Activated B cell treated with CpG ODN at 0.5 μM for 24 hours (primary cell): ENCODE measurements at regions of chr3 and their contacts with region 1.

Region 1: DNA sequence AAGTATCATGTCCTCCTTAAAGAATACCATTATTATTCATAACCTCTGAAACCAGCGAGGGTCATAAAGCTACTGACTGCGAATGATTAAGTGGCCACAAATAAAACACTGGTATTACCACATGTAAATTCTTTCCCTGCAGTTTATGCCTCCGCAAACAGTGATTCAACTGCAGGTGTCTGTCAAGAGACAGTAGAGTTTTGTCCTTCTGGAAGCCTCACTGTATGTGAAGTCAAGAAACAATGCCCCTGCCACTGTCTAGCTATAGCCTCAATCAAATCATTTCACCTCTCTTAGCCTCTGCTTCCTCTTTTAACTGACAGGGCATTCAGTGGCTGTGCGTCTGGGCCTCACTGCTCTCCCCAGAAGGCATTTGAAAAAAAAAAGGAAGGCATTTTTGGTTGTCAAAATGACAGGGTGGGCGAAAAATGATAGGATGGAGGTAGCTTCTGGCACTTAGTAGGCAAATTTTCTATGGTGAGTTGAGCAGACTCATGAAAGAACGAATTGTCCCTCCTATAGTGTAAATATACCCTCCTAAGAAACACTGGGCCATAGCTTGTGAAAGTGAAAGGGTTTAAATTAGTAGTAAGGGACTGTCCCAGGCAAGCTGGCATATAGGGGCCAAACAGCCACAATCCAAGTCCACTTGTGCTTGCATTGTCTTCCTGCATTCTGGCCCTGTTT is 66.7 kb downstream of the FILIP1L start:
- DNase-seq: no peak
- ATAC-seq: peak; percentile 72
- H3K4me3 Mint-ChIP-seq: peak overlapping the region; percentile 81
- H3K27ac Mint-ChIP-seq: peak overlapping the region; percentile 97
- H3K4me1 Mint-ChIP-seq: peaks cover 67% of the 10 kb centered on the region
- H3K27me3 Mint-ChIP-seq: no peaks in the 10 kb centered on the region
- CTCF ChIP-seq: no peak

Region 2: DNA sequence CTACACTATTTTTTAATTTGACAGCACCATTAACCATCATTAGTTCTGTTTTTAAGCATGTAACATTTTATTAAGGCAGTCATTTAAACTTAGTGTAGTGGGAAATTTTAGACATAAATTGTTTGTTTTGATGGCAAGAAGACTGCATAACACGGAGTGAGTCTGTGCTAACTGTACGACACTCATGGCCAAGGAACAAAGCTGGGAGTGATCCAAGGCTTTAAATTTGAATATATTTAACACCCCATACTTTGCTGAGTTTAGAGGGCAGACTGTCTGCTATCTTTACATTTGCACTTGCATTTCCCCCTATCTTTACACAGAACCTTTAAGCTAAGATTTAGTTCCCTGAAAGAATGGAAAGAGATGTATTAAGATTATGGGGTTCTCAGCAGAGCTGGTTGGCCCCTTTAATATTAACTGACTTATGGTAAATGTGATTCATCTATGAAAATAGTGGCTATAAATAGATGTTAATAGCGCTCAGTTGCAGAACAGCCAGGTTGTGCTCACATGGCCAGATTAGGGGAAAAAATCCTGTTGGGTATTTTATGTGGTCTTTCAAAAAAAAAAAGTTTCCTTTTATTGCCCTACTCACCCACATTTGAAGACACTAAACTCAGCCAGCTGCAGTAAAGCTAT is 109.2 kb before region 1 on chr3:
- CTCF ChIA-PET with region 1: no interaction called
- POLR2A ChIA-PET with region 1: interaction called, 6 read pairs
- intact Hi-C with region 1: loop called (anchors 1 kb)
- DNase-seq: no peak
- ATAC-seq: peak; percentile 31
- H3K4me3 Mint-ChIP-seq: peak overlapping the region; percentile 75
- H3K27ac Mint-ChIP-seq: peak overlapping the region; percentile 84
- H3K4me1 Mint-ChIP-seq: peaks cover 27% of the 10 kb centered on the region
- H3K27me3 Mint-ChIP-seq: no peaks in the 10 kb centered on the region
- CTCF ChIP-seq: no peak

Region 3: GRCh38 chr3:100068826-100069225 is 21.2 kb after region 1 on chr3:
- CTCF ChIA-PET with region 1: interaction called, 12 read pairs
- POLR2A ChIA-PET with region 1: interaction called, 5 read pairs
- intact Hi-C with region 1: loop called (anchors 1 kb)
- DNase-seq: peak; percentile 67
- ATAC-seq: peak; percentile 95
- H3K4me3 Mint-ChIP-seq: no peak overlapping the region
- H3K27ac Mint-ChIP-seq: peak overlapping the region; percentile 50
- H3K4me1 Mint-ChIP-seq: peaks cover 39% of the 10 kb centered on the region
- H3K27me3 Mint-ChIP-seq: no peaks in the 10 kb centered on the region
- CTCF ChIP-seq: peak; percentile 83

Region 4: GRCh38 chr3:100708967-100709841 is 661.6 kb after region 1 on chr3 and contains the start of gene TFG:
- CTCF ChIA-PET with region 1: no interaction called
- POLR2A ChIA-PET with region 1: no interaction called
- intact Hi-C with region 1: loop called (anchors 5 kb)
- DNase-seq: peak; percentile 97
- ATAC-seq: peak; percentile 90
- H3K4me3 Mint-ChIP-seq: peak within 1 kb of the TSS; percentile 88
- H3K27ac Mint-ChIP-seq: peak within 1 kb of the TSS; percentile 92
- H3K4me1 Mint-ChIP-seq: peaks cover 40% of the 10 kb centered on the region
- H3K27me3 Mint-ChIP-seq: peaks cover 17% of the 10 kb centered on the region
- CTCF ChIP-seq: no peak
- total RNA-seq, gene TFG: 42.5 and 44.5 TPM in 2 replicates

Region 5: GRCh38 chr3:101685870-101686412 is 1638.3 kb after region 1 on chr3:
- CTCF ChIA-PET with region 1: no interaction called
- POLR2A ChIA-PET with region 1: no interaction called
- intact Hi-C with region 1: loop called (anchors 5 kb)
- DNase-seq: no peak
- ATAC-seq: peak; percentile 6
- H3K4me3 Mint-ChIP-seq: peak overlapping the region; percentile 100
- H3K27ac Mint-ChIP-seq: peak overlapping the region; percentile 99
- H3K4me1 Mint-ChIP-seq: peaks cover 40% of the 10 kb centered on the region
- H3K27me3 Mint-ChIP-seq: no peaks in the 10 kb centered on the region
- CTCF ChIP-seq: no peak

Region 6: GRCh38 chr3:101850246-101851051 is 1802.9 kb after region 1 on chr3:
- CTCF ChIA-PET with region 1: no interaction called
- POLR2A ChIA-PET with region 1: no interaction called
- intact Hi-C with region 1: no loop called
- DNase-seq: no peak
- ATAC-seq: peak; percentile 6
- H3K4me3 Mint-ChIP-seq: peak overlapping the region; percentile 98
- H3K27ac Mint-ChIP-seq: peak overlapping the region; percentile 96
- H3K4me1 Mint-ChIP-seq: peaks cover 67% of the 10 kb centered on the region
- H3K27me3 Mint-ChIP-seq: no peaks in the 10 kb centered on the region
- CTCF ChIP-seq: no peak